ENCODE measurements at regions of chr11 and their contacts with region 1.

Region 1: DNA sequence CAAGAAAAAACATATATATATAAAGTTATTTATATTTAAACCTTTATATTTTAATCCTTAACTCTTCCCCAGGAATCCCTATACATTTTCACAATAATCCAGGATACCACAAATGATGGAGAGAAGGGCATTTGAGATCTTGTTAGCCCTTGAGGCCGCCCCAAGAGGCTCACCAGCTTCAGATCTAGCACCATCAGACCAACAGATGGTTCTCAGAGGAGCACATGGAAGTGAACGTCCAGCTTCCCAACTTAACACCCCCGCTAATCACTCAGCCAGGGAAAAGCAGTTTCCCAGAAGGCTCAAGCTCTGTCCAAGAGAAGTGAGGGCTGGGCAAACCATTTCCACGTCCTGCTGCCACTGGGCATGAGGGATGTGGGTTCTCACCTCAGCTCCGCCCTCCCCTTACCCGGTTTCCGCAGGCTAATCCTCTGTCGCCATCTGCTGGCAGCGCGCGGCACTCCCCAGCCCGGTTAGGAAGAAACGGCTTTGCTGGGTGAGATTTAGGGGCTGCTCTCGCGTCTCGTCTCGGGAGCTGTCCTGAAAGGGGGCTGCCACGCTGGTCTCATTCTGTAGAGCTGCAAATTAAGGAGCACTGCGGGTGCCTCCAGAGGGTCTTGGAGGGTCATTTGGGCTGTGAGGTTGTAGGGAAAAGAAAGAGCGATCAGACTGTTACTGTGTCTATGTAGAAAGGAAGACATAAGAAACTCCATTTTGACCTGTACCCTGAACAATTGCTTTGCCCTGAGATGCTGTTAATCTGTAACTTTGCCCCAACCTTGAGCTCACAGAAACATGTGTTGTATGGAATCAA is 6.8 kb upstream of the FAM111A start:
- DNase-seq: peak; percentile 81 to 85
- H3K4me3 ChIP-seq: no peak overlapping the region
- H3K27ac ChIP-seq: no peak overlapping the region
- H3K4me1 ChIP-seq: peaks cover 0 to 5% of the 10 kb centered on the region in 2 donors
- H3K27me3 ChIP-seq: no peaks in the 10 kb centered on the region
- CTCF ChIP-seq: peak; percentile 87 to 100 (median 93)
- POLR2A ChIP-seq: no peak

Region 2: DNA sequence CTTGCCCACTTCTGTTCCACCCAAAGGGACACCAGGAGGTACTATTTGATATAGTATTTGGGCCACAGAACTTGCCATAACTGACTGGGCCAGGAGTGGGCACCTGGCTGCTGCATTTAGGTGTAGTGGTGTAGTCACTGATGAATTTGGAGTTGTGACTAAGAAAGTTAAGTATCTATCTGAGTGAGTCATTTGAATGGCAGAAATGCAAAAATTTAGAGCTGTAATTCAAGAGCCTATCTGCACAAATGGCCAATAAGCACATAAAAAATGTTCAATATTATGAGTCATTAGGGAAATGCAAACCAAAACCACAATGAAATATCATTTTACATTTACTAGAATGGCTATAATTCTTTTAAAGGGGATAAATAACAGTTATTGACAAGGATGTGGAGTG is 306.1 kb before region 1 on chr11:
- intact Hi-C with region 1: no loop called
- DNase-seq: no peak
- H3K4me3 ChIP-seq: no peak overlapping the region
- H3K27ac ChIP-seq: no peak overlapping the region
- H3K4me1 ChIP-seq: no peaks in the 10 kb centered on the region
- H3K27me3 ChIP-seq: no peaks in the 10 kb centered on the region
- CTCF ChIP-seq: no peak
- POLR2A ChIP-seq: no peak

Region 3: DNA sequence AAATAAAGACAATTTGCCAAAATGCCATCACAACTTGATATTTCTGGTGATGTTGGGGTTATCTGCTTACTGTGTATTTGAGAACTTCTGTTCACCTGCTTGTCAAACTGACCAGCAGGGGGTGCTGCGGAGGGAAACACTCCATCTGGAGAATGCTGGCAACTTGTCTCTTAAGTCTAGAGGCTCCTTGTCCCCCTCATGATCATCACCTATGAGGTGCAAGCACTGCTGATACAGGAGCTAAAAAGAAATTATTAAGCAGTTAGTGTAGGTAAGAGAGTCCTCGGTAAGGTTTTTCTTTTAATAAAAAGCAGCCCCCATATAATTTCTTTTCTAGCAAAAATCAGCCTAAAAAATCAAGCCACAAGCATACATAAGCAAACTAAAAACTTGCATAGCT is 82.5 kb before region 1 on chr11:
- intact Hi-C with region 1: loop called (anchors 5 kb)
- DNase-seq: peak; percentile 66 to 76
- H3K4me3 ChIP-seq: no peak overlapping the region
- H3K27ac ChIP-seq: no peak overlapping the region
- H3K4me1 ChIP-seq: no peaks in the 10 kb centered on the region
- H3K27me3 ChIP-seq: peaks cover 5% of the 10 kb centered on the region
- CTCF ChIP-seq: peak in 4 of 6 experiments; percentile 18 to 63 (median 40)
- POLR2A ChIP-seq: no peak

Region 4: DNA sequence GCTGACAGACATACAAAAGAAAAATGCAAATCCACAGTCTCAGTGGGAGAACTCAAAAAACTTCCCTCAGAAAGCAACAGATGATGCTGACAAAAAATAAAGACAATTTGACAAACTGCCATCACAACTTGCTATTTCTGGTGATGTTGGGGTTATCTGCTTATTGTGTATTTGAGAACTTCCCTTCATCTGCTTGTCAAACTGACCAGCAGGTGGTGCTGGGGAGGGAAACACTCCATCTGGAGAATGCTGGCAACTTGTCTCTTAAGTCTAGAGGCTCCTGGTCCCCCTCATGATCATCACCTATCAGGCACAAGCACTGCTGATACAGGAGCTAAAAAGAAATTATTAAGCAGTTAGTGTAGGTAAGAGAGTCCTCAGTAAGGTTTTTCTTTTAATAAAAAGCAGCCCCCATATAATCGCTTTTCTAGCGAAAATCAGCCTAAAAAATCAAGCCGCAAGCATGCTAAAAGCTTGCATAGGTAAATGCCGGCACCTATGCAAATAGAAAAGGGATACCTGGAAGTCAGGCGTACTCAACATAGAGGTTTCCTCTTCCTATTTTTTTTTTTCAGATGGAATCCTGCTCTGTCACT is 38.6 kb before region 1 on chr11:
- intact Hi-C with region 1: loop called (anchors 5 kb)
- DNase-seq: peak; percentile 55 to 59
- H3K4me3 ChIP-seq: no peak overlapping the region
- H3K27ac ChIP-seq: no peak overlapping the region
- H3K4me1 ChIP-seq: peaks cover 0 to 6% of the 10 kb centered on the region in 2 donors
- H3K27me3 ChIP-seq: no peaks in the 10 kb centered on the region
- CTCF ChIP-seq: peak; percentile 13 to 65 (median 40)
- POLR2A ChIP-seq: no peak

Region 5: GRCh38 chr11:59426361-59427068 is 290.7 kb after region 1 on chr11 and contains the start of gene OR5A2:
- intact Hi-C with region 1: no loop called
- DNase-seq: no peak
- H3K4me3 ChIP-seq: no peak within 1 kb of the TSS
- H3K27ac ChIP-seq: no peak within 1 kb of the TSS
- H3K4me1 ChIP-seq: no peaks in the 10 kb centered on the region
- H3K27me3 ChIP-seq: no peaks in the 10 kb centered on the region
- CTCF ChIP-seq: no peak
- POLR2A ChIP-seq: no peak
- total RNA-seq, gene OR5A2: not detected